Endothelial cell of umbilical vein (primary cell): ENCODE measurements at regions of chr19 and their contacts with region 1.

Region 1: GRCh38 chr19:9565900-9566705 is 18.2 kb downstream of the ZNF121 start:
- DNase-seq: no peak
- H3K4me3 ChIP-seq: no peak overlapping the region
- H3K27ac ChIP-seq: no peak overlapping the region
- H3K4me1 ChIP-seq: no peaks in the 10 kb centered on the region
- H3K27me3 ChIP-seq: no peaks in the 10 kb centered on the region
- CTCF ChIP-seq: no peak
- POLR2A ChIP-seq: no peak

Region 2: DNA sequence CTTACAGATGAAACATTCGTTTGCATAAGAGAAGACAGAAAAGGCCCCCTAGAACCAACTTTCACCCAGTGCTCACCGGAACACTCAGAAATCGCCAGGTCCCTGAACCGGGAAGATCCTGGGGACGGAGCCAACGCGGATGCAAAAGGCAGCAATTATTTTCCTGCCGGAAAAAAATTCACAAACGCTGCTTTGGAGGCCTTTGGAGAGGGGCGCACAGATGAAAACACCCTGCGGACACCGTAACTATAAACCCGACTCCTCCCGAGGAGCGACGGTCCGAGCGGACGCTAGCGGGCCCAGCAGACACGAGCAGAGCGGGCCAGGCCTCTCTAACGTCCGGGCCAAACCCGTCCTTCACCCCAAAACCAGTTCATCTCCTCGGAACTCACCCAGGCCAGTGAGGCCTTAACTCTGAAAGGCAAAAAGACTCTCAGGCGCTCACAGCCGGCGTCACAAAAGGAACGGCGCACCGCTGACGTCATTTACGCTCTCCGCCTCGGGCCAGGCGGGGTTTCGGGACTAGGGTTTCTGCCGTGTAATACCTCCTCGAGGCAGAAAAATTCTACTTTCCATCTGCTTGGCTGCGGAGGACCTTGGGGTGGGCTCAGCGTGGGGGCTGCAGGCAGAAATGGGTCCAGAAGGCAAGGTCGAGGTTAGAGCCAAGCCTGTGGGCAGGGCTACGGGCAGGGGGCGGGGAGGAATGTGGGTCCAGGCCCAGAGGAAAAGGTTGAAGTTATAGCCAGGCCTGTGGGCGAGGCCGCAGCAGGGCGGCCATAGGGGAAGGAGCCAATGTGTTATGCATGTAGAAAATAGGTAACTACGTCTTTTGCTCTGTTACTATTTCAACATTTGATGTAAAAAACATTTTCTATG is 27.7 kb before region 1 on chr19 and contains the start of gene ZNF426:
- CTCF ChIA-PET with region 1: no interaction called
- POLR2A ChIA-PET with region 1: no interaction called
- dilution Hi-C with region 1: no loop called
- intact Hi-C with region 1: loop called (anchors 2 kb)
- DNase-seq: peak; percentile 89
- H3K4me3 ChIP-seq: peak within 1 kb of the TSS; percentile 57 to 99 (median 59)
- H3K27ac ChIP-seq: peak within 1 kb of the TSS; percentile 82
- H3K4me1 ChIP-seq: peaks cover 5% of the 10 kb centered on the region
- H3K27me3 ChIP-seq: no peaks in the 10 kb centered on the region
- CTCF ChIP-seq: no peak
- POLR2A ChIP-seq: peak; percentile 54
- total RNA-seq, gene ZNF426: 14.6 and 16.1 TPM in 2 replicates